Posterior cingulate gyrus (tissue), 11 donors: ENCODE measurements at regions of chr10 and their contacts with region 1.

Region 1: GRCh38 chr10:51063659-51064535 is 10.4 kb upstream of the PRKG1 start:
- DNase-seq: no peak

Region 2: DNA sequence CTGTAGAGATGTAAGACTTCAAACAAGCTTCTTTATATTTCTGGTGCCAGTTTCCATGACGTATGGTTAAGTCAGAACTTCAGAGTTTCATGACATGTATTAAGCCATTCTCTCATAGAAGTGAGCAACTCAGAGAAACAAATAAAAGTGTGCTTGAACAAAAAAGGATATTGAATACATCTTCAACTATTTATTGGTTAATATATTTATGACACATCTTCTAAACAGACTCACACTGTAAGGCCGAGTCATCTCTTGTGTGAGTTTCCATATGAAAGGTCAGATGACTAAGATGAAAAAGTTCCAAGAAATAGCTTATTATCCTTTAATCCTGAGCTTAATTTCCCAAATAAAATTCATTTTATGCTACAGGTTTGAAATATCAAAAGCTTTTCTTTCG is 741.0 kb after region 1 on chr10:
- intact Hi-C with region 1: no loop called
- DNase-seq: no peak

Region 3: GRCh38 chr10:52215745-52216361 is 1152.0 kb after region 1 on chr10:
- intact Hi-C with region 1: loop called (anchors 5 kb)
- DNase-seq: peak in 3 of 10 donors; percentile 27 to 57 (median 44)